CD8-positive, alpha-beta T cell (primary cell): ENCODE measurements at regions of chr15 and their contacts with region 1.

Region 1: DNA sequence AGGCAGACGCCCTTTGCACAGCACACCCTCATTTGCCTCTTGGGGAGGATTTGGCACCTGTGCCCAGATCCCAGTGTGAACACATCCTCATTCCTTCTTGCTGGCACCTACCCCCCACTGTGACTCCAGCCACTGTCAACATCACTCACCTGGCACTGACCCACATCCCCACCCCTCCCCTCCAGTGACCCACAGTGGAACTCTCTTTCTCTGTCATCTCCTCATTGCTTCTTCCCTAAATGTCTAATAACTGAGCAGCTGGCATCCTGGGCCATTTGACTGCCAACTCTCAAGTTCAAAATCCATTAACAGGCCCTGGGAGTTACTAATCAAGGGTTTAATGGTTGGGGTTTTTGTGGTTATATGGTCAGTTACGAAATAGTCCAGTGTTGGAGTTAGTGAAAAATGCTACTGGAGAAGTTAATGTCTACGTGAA is 14.4 kb downstream of the SNAPC5 start:
- DNase-seq: no peak
- ATAC-seq: no peak
- H3K4me3 ChIP-seq: no peak overlapping the region
- H3K4me3 Mint-ChIP-seq: no peak overlapping the region
- H3K27ac ChIP-seq: no peak overlapping the region
- H3K27ac Mint-ChIP-seq: no peak overlapping the region
- H3K4me1 ChIP-seq: no peaks in the 10 kb centered on the region
- H3K4me1 Mint-ChIP-seq: no peaks in the 10 kb centered on the region
- H3K27me3 ChIP-seq: no peaks in the 10 kb centered on the region
- H3K27me3 Mint-ChIP-seq: no peaks in the 10 kb centered on the region
- CTCF ChIP-seq: no peak

Region 2: GRCh38 chr15:66459818-66460615 is 23.1 kb before region 1 on chr15:
- CTCF ChIA-PET with region 1: no interaction called
- POLR2A ChIA-PET with region 1: no interaction called
- intact Hi-C with region 1: loop called in 1 of 2 experiments (anchors 2 kb)
- DNase-seq: no peak
- ATAC-seq: no peak
- H3K4me3 ChIP-seq: no peak overlapping the region
- H3K4me3 Mint-ChIP-seq: no peak overlapping the region
- H3K27ac ChIP-seq: peak overlapping the region in 1 of 2 experiments; percentile 36
- H3K27ac Mint-ChIP-seq: peak overlapping the region; percentile 50
- H3K4me1 ChIP-seq: peaks cover 6% of the 10 kb centered on the region
- H3K4me1 Mint-ChIP-seq: peaks cover 11% of the 10 kb centered on the region
- H3K27me3 ChIP-seq: no peaks in the 10 kb centered on the region
- H3K27me3 Mint-ChIP-seq: no peaks in the 10 kb centered on the region
- CTCF ChIP-seq: no peak

Region 3: DNA sequence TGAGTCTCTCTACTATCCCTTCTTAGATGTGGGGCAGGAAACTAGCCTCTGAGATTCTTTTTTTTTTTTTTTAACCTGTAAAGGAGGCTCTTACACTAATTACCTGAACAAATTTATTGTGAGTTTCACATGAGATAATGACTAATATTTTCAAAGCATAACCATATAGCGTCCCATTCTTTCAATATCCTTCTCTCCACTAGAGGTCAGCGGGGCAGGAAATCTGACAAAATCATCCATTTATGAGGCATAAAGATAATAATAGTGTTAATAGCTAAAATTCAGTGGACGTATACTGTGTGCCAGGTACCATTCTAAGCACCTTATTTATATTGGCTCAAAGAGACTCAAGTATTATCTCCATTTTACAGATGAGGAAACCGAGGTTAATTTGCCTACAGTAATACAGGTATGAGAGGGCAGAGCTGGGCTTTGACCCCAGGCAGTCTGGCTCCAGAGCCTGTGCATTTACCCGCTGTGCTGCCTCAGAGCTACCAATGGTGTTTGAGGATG is 202.5 kb after region 1 on chr15:
- CTCF ChIA-PET with region 1: no interaction called
- POLR2A ChIA-PET with region 1: no interaction called
- intact Hi-C with region 1: no loop called
- DNase-seq: no peak
- ATAC-seq: no peak
- H3K4me3 ChIP-seq: no peak overlapping the region
- H3K4me3 Mint-ChIP-seq: no peak overlapping the region
- H3K27ac ChIP-seq: no peak overlapping the region
- H3K27ac Mint-ChIP-seq: no peak overlapping the region
- H3K4me1 ChIP-seq: no peaks in the 10 kb centered on the region
- H3K4me1 Mint-ChIP-seq: no peaks in the 10 kb centered on the region
- H3K27me3 ChIP-seq: no peaks in the 10 kb centered on the region
- H3K27me3 Mint-ChIP-seq: no peaks in the 10 kb centered on the region
- CTCF ChIP-seq: no peak

Region 4: GRCh38 chr15:66981771-66982170 is 498.6 kb after region 1 on chr15:
- CTCF ChIA-PET with region 1: no interaction called
- POLR2A ChIA-PET with region 1: no interaction called
- intact Hi-C with region 1: no loop called
- DNase-seq: peak in 1 of 9 experiments; percentile 25
- ATAC-seq: no peak
- H3K4me3 ChIP-seq: no peak overlapping the region
- H3K4me3 Mint-ChIP-seq: no peak overlapping the region
- H3K27ac ChIP-seq: no peak overlapping the region
- H3K27ac Mint-ChIP-seq: no peak overlapping the region
- H3K4me1 ChIP-seq: no peaks in the 10 kb centered on the region
- H3K4me1 Mint-ChIP-seq: no peaks in the 10 kb centered on the region
- H3K27me3 ChIP-seq: no peaks in the 10 kb centered on the region
- H3K27me3 Mint-ChIP-seq: peaks cover 16% of the 10 kb centered on the region
- CTCF ChIP-seq: no peak